Cardiac septum (tissue), 1 donor: ENCODE measurements at regions of chr1 and their contacts with region 1.

Region 1: GRCh38 chr1:203702130-203702577 is 62.8 kb upstream of the LAX1 start:
- DNase-seq: no peak

Region 2: DNA sequence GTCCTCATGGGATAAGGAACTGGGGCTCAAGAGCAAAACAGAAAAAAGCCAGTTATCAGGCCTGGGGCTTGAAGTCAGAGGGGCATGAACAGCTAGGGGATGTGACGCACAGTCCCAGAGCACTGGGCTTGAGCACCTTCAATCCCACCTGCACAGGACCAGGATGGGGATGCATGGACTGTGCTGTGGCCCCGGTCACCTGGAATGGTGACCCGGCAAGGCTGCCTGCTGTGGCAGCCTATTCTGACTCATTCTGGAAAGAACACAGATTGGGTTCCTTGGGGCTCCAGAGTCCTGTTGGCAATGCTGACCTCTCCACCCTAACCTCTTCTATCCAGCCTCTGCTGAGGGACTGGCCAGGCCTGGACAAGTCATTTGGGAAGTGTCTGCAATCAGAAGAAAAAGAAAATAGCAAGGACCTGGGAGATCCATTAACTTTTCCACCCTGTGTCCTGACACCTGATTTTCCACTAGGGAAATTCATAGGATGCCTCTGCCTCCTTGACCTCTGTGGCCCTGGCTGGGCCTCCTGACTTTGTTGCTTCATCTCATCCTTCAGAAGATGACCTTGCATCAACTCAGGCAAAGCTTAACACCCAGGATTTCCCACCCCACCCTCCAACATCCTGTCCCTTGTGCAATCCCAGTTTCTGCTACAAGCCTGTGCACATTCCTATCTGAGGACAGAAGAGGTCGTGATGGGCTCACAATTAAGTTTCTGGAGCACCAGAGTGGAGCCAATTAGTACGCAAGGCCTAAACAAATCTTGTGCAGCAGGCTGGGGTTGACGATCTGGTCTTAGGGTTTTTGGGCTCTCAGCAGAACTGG is 333.3 kb before region 1 on chr1:
- intact Hi-C with region 1: loop called (anchors 5 kb)
- DNase-seq: no peak

Region 3: DNA sequence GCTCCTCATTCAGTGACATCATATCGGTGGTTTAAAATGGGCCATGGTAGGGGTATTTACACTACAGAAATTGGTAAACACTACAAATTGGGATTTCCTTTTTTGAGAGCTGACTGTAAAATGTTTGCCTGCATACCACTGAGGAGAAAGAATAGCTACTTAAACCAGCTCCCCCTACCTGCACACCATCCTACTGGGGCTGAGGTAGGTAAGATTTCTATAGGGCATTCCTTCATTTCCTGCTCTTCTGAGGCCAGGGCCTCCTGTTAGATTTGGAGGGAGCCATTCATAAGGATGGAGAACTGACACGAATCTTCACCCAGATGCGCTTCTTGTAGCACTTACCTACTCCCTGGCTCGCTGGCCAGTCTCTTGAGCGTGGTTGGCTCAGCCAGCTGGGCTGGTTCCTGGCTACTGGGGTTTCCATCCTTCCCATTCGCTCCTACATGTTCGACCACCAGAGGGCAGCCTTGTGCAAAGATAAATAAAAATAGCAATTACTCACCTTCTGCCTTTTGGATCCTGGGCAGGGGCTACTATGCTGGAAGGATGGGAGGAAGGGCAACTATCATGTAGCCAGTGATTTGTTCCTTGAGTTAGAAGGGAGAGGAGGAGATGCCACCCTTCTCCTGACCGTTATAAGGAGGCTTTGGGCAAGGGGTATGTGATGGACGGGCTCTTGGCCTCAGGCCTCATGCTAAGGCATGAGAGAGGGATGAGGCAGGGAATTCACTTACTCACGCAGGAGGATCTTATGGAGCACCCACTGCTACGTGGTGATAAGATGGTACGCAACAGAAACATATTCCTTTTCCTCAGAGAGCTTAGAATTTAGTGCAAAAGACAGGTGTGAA is 197.5 kb before region 1 on chr1:
- intact Hi-C with region 1: loop called (anchors 1 kb)
- DNase-seq: peak; percentile 83

Region 4: GRCh38 chr1:203558064-203558760 is 143.9 kb before region 1 on chr1:
- intact Hi-C with region 1: loop called (anchors 5 kb)
- DNase-seq: no peak

Region 5: GRCh38 chr1:203673550-203674427 is 28.4 kb before region 1 on chr1:
- intact Hi-C with region 1: loop called (anchors 5 kb)
- DNase-seq: no peak

Region 6: GRCh38 chr1:203906932-203907331 is 204.8 kb after region 1 on chr1:
- intact Hi-C with region 1: no loop called
- DNase-seq: no peak